PC-9 (cell line): ENCODE measurements at regions of chr11 and their contacts with region 1.

Region 1: DNA sequence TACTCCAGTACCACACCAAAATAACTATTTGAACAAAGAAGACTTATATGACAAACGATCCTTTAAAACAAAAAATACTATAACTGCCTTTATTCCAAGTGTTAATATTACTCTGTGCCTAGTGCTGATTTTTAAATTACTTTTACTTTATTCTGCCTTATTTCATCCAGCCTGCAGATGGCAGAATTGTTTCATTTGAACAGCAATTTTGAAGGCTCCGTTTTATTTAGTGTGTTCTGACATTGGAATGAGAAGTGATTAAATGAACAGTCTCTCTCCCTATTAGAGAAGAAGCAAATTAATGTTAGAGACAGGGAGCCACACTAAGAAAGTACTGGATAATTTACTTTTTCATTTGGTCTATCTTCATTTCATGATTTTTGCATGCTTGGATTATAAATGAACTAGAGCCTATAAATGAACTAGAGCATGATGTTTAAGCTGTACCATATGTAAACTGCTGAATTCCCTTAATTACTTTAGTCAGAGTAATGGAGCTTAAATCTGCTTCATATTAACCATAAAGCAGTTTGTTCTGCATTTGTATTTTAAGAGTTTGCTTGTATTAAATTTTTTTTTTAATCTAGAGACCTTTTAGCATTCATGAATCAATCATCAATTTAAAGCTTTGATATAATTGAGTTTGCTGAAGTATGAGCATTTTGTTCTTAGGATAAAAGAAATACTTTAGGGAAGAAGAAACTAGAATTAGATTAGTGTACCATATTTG is 9.8 kb downstream of the PDHX start:
- DNase-seq: peak; percentile 8 to 50
- H3K4me3 ChIP-seq: no peak overlapping the region
- H3K27ac ChIP-seq: no peak overlapping the region
- H3K4me1 ChIP-seq: peaks cover 13% of the 10 kb centered on the region
- H3K27me3 ChIP-seq: no peaks in the 10 kb centered on the region
- CTCF ChIP-seq: peak; percentile 94

Region 2: DNA sequence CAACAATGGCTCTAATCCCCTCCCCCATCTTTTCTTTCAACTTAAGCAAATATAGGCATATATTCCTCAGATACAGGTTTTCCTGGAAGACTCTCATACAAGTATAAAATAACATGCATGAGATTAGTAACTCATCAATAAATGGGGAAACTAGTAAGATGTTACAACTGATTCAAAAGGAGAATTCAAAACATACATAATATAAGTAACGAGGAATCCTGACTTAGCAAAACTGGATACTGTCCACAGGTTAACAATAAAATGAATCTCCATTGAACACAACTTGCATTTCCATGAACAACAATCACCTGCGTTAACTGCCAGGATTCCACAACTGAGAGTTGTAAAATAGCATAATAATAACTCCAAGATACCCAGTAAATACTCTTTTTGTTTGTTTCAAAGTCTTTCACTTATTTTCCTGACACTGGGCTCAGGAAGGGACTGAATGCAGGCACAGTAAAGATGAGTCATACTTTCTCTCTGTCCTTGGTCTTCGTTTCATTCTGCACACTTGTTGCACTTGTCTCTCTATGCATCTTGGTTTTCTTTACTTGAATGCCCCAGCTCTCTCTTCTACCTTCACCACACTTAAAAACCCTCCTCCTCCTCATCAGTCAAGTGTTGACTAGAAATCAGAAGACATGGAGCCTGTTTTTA is 18.2 kb before region 1 on chr11:
- CTCF ChIA-PET with region 1: no interaction called
- POLR2A ChIA-PET with region 1: no interaction called
- intact Hi-C with region 1: no loop called
- DNase-seq: no peak
- H3K4me3 ChIP-seq: no peak overlapping the region
- H3K27ac ChIP-seq: no peak overlapping the region
- H3K4me1 ChIP-seq: peaks cover 20% of the 10 kb centered on the region
- H3K27me3 ChIP-seq: no peaks in the 10 kb centered on the region
- CTCF ChIP-seq: no peak

Region 3: GRCh38 chr11:34940026-34940677 is 13.9 kb after region 1 on chr11:
- CTCF ChIA-PET with region 1: no interaction called
- POLR2A ChIA-PET with region 1: no interaction called
- intact Hi-C with region 1: no loop called
- DNase-seq: no peak
- H3K4me3 ChIP-seq: no peak overlapping the region
- H3K27ac ChIP-seq: no peak overlapping the region; the same call in 1 of the 2 replicates
- H3K4me1 ChIP-seq: no peaks in the 10 kb centered on the region
- H3K27me3 ChIP-seq: no peaks in the 10 kb centered on the region
- CTCF ChIP-seq: no peak; the same call in 1 of the 2 replicates

Region 4: DNA sequence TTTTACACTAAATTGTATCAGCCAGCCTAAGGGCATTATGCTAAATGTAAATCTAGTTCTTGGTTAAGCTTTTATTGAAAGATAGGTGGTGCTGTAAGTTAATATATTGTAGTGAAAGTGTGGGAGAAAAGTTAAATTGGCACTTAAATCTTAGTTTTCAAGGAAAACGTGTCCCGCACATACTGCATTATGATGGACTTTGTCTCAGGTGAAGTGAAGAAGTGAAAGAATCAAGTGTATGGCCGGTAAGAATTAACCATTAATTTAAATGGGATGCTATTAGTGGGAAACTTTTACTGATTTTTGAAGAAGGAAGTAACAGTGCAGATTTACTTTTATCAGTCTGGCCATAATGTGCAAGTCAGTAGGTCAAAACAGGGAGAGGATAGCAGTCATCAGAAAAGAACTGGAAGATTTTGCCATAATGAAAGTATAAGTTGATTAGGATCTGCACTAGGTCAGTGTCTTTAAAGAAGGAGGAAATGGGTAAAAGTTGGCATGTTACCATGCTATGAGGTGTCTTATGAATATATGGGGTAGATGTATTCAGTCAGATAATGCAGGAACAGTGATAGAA is 71.8 kb after region 1 on chr11:
- CTCF ChIA-PET with region 1: no interaction called
- POLR2A ChIA-PET with region 1: no interaction called
- intact Hi-C with region 1: loop called (anchors 5 kb)
- DNase-seq: peak in 1 of 2 experiments; percentile 71
- H3K4me3 ChIP-seq: no peak overlapping the region
- H3K27ac ChIP-seq: peak overlapping the region; percentile 47
- H3K4me1 ChIP-seq: peaks cover 11% of the 10 kb centered on the region
- H3K27me3 ChIP-seq: no peaks in the 10 kb centered on the region
- CTCF ChIP-seq: peak; percentile 92

Region 5: GRCh38 chr11:35363854-35364780 is 437.9 kb after region 1 on chr11:
- CTCF ChIA-PET with region 1: no interaction called
- POLR2A ChIA-PET with region 1: interaction called, 28 read pairs
- intact Hi-C with region 1: no loop called
- DNase-seq: peak; percentile 89 to 98
- H3K4me3 ChIP-seq: peak overlapping the region; percentile 22; the same call in 1 of the 2 replicates
- H3K27ac ChIP-seq: peak overlapping the region; percentile 84
- H3K4me1 ChIP-seq: peaks cover 40% of the 10 kb centered on the region
- H3K27me3 ChIP-seq: no peaks in the 10 kb centered on the region
- CTCF ChIP-seq: no peak

Region 6: GRCh38 chr11:35412285-35412684 is 486.0 kb after region 1 on chr11:
- CTCF ChIA-PET with region 1: no interaction called
- POLR2A ChIA-PET with region 1: no interaction called
- intact Hi-C with region 1: loop called (anchors 1 kb)
- DNase-seq: no peak
- H3K4me3 ChIP-seq: no peak overlapping the region
- H3K27ac ChIP-seq: no peak overlapping the region
- H3K4me1 ChIP-seq: no peaks in the 10 kb centered on the region
- H3K27me3 ChIP-seq: peaks cover 28% of the 10 kb centered on the region
- CTCF ChIP-seq: peak; percentile 78

Region 7: GRCh38 chr11:36265793-36266628 is 1339.7 kb after region 1 on chr11:
- CTCF ChIA-PET with region 1: no interaction called
- POLR2A ChIA-PET with region 1: no interaction called
- intact Hi-C with region 1: loop called (anchors 1 kb)
- DNase-seq: peak; percentile 46 to 63
- H3K4me3 ChIP-seq: no peak overlapping the region
- H3K27ac ChIP-seq: no peak overlapping the region
- H3K4me1 ChIP-seq: no peaks in the 10 kb centered on the region
- H3K27me3 ChIP-seq: no peaks in the 10 kb centered on the region
- CTCF ChIP-seq: peak; percentile 97

Region 8: GRCh38 chr11:36492724-36493304 is 1566.5 kb after region 1 on chr11:
- CTCF ChIA-PET with region 1: no interaction called
- POLR2A ChIA-PET with region 1: no interaction called
- intact Hi-C with region 1: loop called (anchors 10 kb)
- DNase-seq: no peak
- H3K4me3 ChIP-seq: no peak overlapping the region
- H3K27ac ChIP-seq: no peak overlapping the region
- H3K4me1 ChIP-seq: no peaks in the 10 kb centered on the region
- H3K27me3 ChIP-seq: no peaks in the 10 kb centered on the region
- CTCF ChIP-seq: peak; percentile 95